ENCODE measurements at regions of chr17 and their contacts with region 1.

Region 1: GRCh38 chr17:67689534-67690177 is 28.1 kb upstream of the NOL11 start:
- DNase-seq: peak in 8 of 9 donors; percentile 30 to 72 (median 58)
- ATAC-seq: peak; percentile 76
- H3K4me3 ChIP-seq: no peak overlapping the region
- H3K4me3 Mint-ChIP-seq: no peak overlapping the region
- H3K27ac ChIP-seq: no peak overlapping the region
- H3K27ac Mint-ChIP-seq: peak overlapping the region in 1 of 9 donors; percentile 31
- H3K4me1 ChIP-seq: no peaks in the 10 kb centered on the region
- H3K4me1 Mint-ChIP-seq: peaks cover 0 to 7% (median 4%) of the 10 kb centered on the region in 7 donors
- H3K27me3 ChIP-seq: no peaks in the 10 kb centered on the region
- H3K27me3 Mint-ChIP-seq: no peaks in the 10 kb centered on the region

Region 2: DNA sequence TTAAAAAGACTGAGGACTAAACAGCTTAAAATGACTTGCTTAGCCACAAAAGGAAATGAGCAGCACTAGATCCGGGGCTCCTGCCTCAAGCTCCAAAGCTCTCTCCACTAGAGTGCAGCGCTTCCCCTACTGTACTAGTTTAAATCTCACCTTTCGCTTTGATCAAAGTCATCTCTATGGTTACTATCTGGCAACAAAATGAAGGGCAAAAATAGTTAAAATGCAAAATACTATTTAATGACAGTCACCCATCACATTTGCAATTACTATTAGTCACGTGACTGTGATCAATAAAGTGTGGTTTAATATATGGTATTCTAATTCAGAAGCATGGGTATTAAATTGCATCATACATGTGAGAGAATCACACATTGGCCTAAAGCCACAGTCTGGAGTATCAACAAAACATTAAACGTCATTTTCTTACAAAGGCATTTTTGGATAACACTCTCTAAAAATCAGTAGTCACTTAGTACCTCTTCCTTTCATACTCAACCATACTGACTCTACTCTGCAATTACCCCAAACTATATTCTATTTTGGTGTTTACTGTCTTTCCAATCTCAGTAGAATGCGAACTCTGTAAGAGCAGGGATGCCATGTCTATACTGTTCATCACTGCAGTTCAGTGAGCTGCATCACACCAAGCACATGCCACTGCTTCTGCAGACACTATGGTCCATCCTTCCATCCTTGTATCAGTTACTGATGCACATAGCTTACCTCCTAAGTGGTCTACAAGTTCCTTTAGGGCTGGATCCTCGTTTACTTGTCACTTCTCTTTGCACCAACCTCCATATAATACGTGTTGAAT is 329.5 kb before region 1 on chr17:
- CTCF ChIA-PET with region 1: interaction called, 5 read pairs
- POLR2A ChIA-PET with region 1: interaction called, 3 read pairs
- intact Hi-C with region 1: loop called in 1 of 2 experiments (anchors 1 kb)
- DNase-seq: peak in 7 of 9 donors; percentile 54 to 78 (median 70)
- ATAC-seq: peak; percentile 97
- H3K4me3 ChIP-seq: no peak overlapping the region
- H3K4me3 Mint-ChIP-seq: peak overlapping the region; percentile 6 to 77 (median 49)
- H3K27ac ChIP-seq: peak overlapping the region; percentile 58
- H3K27ac Mint-ChIP-seq: peak overlapping the region; percentile 60 to 94 (median 80)
- H3K4me1 ChIP-seq: peaks cover 33 to 39% of the 10 kb centered on the region in 2 donors
- H3K4me1 Mint-ChIP-seq: peaks cover 47 to 81% (median 60%) of the 10 kb centered on the region in 7 donors
- H3K27me3 ChIP-seq: no peaks in the 10 kb centered on the region
- H3K27me3 Mint-ChIP-seq: no peaks in the 10 kb centered on the region

Region 3: DNA sequence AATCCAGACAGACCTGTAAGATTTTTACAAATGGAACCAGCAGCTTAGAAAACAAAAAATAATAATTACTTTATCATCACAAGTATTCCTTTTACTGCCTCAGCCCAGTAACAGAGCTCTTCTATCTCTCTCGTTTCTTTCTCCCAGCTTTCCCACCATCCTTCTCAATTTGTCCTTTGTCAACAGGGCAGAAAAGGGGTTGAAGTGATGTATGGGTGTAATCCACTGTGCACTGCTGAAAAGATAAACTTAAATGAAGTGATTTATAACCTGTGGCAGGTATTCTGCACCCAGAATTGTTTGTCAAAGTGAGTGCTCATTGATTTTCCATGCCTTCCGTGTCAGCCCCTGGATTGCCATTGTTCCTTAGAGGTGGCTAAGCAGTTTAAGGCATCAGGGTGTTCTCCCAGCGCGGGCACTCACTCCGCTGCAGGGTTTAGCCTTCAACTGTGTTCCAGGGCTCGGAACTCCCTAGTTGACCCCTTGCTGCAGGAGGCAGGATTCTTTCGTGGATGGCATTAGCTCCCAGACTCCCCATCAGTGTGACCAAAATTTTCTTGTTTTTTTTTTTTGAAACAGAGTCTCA is 229.7 kb before region 1 on chr17:
- CTCF ChIA-PET with region 1: no interaction called
- POLR2A ChIA-PET with region 1: no interaction called
- intact Hi-C with region 1: no loop called
- DNase-seq: no peak
- ATAC-seq: no peak
- H3K4me3 ChIP-seq: no peak overlapping the region
- H3K4me3 Mint-ChIP-seq: peak overlapping the region in 1 of 10 donors; percentile 27
- H3K27ac ChIP-seq: no peak overlapping the region
- H3K27ac Mint-ChIP-seq: peak overlapping the region in 8 of 9 donors; percentile 21 to 97 (median 86)
- H3K4me1 ChIP-seq: peaks cover 31 to 53% of the 10 kb centered on the region in 2 donors
- H3K4me1 Mint-ChIP-seq: peaks cover 44 to 93% (median 87%) of the 10 kb centered on the region in 7 donors
- H3K27me3 ChIP-seq: no peaks in the 10 kb centered on the region
- H3K27me3 Mint-ChIP-seq: no peaks in the 10 kb centered on the region

Region 4: GRCh38 chr17:67629971-67630320 is 59.7 kb before region 1 on chr17:
- CTCF ChIA-PET with region 1: no interaction called
- POLR2A ChIA-PET with region 1: no interaction called
- intact Hi-C with region 1: loop called in 1 of 2 experiments (anchors 2 kb)
- DNase-seq: peak in 6 of 9 donors; percentile 4 to 38 (median 24)
- ATAC-seq: peak; percentile 45
- H3K4me3 ChIP-seq: no peak overlapping the region
- H3K4me3 Mint-ChIP-seq: no peak overlapping the region
- H3K27ac ChIP-seq: no peak overlapping the region
- H3K27ac Mint-ChIP-seq: peak overlapping the region in 3 of 9 donors; percentile 22 to 59 (median 42)
- H3K4me1 ChIP-seq: no peaks in the 10 kb centered on the region
- H3K4me1 Mint-ChIP-seq: peaks cover 5 to 17% (median 13%) of the 10 kb centered on the region in 7 donors
- H3K27me3 ChIP-seq: no peaks in the 10 kb centered on the region
- H3K27me3 Mint-ChIP-seq: no peaks in the 10 kb centered on the region

Measured in naive thymus-derived CD4-positive, alpha-beta T cell (primary cell).